ENCODE measurements at regions of chr7 and their contacts with region 1.

Region 1: DNA sequence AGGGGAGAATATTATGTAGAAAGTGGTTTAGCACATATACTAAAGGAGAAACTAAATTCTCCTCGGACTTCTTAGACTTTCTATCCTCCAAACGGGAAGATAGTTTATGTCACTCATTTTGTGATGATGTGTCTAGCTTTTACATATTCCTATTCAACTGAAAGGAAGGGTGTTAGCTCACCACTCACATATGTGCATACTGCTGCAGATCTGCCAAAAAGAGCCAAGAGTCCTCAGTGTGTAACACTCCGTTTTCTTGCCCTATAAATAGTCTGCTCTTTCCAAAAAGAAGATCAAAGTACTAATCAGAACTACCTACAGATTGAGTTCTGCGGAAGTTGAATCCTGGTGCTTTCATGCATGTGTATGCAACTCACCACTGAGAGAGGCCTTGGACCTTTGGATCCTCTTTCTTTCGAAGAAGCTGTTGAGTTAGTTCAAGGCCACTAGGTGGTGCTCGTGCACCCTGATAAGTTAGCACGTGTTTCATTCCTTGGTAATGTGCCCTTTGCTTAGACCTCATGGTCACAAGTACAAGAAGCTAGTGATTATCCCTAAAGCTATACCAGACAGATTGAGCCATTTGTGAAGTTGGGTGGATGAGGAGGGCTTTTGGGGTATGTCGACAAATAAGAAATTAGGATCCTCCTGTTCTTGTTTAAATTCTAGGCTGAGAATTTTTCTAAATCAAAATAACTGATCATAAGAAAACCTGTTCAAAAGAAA is 14.1 kb downstream of the YAE1 start:
- DNase-seq: peak; percentile 95
- H3K4me3 ChIP-seq: no peak overlapping the region
- H3K27ac ChIP-seq: no peak overlapping the region
- H3K4me1 ChIP-seq: no peaks in the 10 kb centered on the region
- H3K27me3 ChIP-seq: no peaks in the 10 kb centered on the region

Region 2: DNA sequence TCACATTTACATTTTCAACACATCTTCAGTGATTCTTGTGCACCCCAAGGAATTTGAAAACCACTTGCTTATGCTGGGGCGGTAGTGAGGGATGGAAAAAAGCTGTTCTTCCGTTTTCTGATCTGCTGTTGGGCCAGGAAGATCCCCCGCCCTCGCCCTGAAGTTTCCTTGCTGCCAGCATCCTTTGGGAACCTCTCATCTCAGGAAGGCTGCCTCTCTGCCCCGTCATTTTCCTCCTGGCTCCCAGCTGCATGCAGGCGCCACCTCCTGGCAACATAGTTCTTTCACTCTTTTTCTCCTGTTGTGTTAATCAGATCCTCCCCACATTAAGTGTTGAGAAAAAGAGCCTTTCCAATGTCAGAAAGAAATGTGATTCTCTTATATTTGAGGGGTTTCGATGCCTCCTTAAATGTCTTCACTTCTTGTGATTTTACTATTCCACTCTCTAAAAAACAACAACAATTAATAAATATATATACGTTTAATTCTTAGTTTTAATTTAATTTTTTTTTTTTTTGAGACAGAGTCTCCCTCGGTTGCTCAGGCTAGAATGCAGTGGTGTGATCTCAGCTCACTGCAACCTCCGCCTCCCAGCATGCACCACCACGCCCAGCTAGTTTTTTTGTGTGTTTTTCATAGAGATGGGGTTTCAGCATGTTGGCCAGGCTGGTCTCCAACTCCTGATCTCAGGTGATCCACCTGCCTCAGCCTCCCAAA is 165.9 kb after region 1 on chr7:
- in situ Hi-C with region 1: loop called (anchors 5 kb)
- DNase-seq: peak; percentile 91
- H3K4me3 ChIP-seq: no peak overlapping the region
- H3K27ac ChIP-seq: peak overlapping the region; percentile 14; the same call in 1 of the 2 replicates
- H3K4me1 ChIP-seq: peaks cover 8% of the 10 kb centered on the region
- H3K27me3 ChIP-seq: no peaks in the 10 kb centered on the region

Measured in GM23248 (cell line).